Activated B cell treated with CpG ODN at 0.5 μM for 24 hours (primary cell): ENCODE measurements at regions of chr7 and their contacts with region 1.

Region 1: DNA sequence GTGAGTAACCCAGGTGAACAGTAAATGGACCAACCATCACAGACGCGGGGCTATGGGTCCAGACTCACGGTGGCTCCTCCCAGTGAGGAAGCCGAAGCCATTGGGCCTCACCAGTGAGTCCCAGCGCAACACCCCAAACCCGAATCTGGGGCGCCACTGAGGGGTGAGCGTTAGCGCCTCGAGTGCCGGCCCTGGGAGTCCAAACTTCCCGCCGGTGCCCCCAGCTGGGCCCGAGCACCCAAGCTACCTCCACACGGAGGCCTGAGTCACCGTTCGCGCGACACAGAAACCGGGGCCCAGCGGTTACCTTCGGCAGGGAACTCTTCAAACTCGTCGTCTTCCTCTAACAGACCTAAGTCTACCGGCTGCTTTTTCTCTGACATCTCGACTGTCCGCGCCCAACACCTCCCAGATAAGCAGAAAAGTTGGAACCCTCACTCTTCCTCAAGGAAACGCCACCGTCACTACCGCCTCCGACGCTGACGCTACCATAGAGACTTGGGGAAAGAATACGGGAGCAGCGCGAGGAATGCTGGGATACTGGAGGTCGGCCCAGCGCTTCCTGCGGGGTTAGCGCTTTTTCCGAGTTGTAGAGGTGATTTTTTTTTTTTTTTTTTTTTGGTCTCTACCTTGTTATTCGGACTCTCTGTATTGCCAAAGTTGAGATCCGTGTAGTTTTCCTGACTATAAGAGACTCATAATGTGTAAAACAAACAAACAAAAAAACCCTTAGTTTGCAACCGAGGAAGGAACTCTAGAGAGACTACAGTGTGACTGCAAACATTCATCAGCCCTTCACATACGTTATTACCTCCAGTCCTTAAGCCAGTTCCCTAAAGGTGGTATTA is at the start of gene SEM1:
- DNase-seq: peak; percentile 53
- ATAC-seq: peak; percentile 89
- H3K4me3 Mint-ChIP-seq: peak within 1 kb of the TSS; percentile 100
- H3K27ac Mint-ChIP-seq: peak within 1 kb of the TSS; percentile 98
- H3K4me1 Mint-ChIP-seq: peaks cover 40% of the 10 kb centered on the region
- H3K27me3 Mint-ChIP-seq: peaks cover 3% of the 10 kb centered on the region
- CTCF ChIP-seq: no peak
- total RNA-seq, gene SEM1: 32.3 and 35.5 TPM in 2 replicates

Region 2: GRCh38 chr7:95828824-95829790 is 880.5 kb before region 1 on chr7:
- CTCF ChIA-PET with region 1: no interaction called
- POLR2A ChIA-PET with region 1: no interaction called
- intact Hi-C with region 1: no loop called
- DNase-seq: no peak
- ATAC-seq: no peak
- H3K4me3 Mint-ChIP-seq: no peak overlapping the region
- H3K27ac Mint-ChIP-seq: no peak overlapping the region
- H3K4me1 Mint-ChIP-seq: no peaks in the 10 kb centered on the region
- H3K27me3 Mint-ChIP-seq: no peaks in the 10 kb centered on the region
- CTCF ChIP-seq: no peak

Region 3: DNA sequence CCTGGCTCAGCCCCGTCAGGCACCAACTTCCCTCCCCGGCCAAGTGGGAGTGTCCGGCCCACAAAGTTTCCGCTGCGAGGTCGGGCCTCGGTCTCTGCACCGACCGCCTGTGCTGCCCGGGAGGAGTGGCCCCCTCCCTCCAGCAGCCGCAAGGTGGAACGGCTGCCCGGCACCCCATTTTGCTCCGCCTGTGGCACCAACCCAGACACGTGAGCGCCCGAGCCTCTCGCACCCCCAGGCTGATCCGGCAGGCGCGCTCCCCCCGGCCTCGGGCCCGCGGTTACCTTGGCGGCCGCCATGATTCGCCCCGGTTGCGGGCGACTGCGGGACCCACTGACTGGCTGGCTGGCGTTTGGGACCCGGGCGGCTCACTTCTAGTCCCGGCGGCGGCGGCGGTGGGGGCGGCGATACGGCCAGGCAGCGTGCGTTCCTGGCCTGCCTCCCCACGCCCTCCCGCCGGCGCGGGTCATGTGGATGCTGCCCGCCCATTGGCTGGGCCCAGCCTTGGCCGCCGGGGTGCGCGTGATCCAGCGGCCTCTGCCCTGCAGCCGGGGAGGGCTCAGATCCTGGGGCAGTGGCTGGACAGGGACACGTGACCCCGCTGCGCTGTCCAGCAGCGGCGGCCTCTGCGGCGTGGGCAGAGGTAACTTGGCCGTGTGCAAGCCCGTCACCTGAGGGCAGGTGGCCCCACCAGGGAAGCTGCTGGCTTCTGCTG is 387.8 kb before region 1 on chr7 and contains the start of gene SLC25A13:
- CTCF ChIA-PET with region 1: no interaction called
- POLR2A ChIA-PET with region 1: no interaction called
- intact Hi-C with region 1: loop called (anchors 10 kb)
- DNase-seq: peak; percentile 69
- ATAC-seq: peak; percentile 71
- H3K4me3 Mint-ChIP-seq: peak within 1 kb of the TSS; percentile 90
- H3K27ac Mint-ChIP-seq: peak within 1 kb of the TSS; percentile 88
- H3K4me1 Mint-ChIP-seq: peaks cover 41% of the 10 kb centered on the region
- H3K27me3 Mint-ChIP-seq: no peaks in the 10 kb centered on the region
- CTCF ChIP-seq: no peak
- total RNA-seq, gene SLC25A13: 28.5 and 29.1 TPM in 2 replicates

Region 4: GRCh38 chr7:96836456-96836855 is 126.9 kb after region 1 on chr7:
- CTCF ChIA-PET with region 1: no interaction called
- POLR2A ChIA-PET with region 1: interaction called, 11 read pairs
- intact Hi-C with region 1: no loop called
- DNase-seq: no peak
- ATAC-seq: no peak
- H3K4me3 Mint-ChIP-seq: no peak overlapping the region
- H3K27ac Mint-ChIP-seq: no peak overlapping the region
- H3K4me1 Mint-ChIP-seq: peaks cover 14% of the 10 kb centered on the region
- H3K27me3 Mint-ChIP-seq: no peaks in the 10 kb centered on the region
- CTCF ChIP-seq: no peak